ENCODE measurements at regions of chr12 and their contacts with region 1.

Region 1: DNA sequence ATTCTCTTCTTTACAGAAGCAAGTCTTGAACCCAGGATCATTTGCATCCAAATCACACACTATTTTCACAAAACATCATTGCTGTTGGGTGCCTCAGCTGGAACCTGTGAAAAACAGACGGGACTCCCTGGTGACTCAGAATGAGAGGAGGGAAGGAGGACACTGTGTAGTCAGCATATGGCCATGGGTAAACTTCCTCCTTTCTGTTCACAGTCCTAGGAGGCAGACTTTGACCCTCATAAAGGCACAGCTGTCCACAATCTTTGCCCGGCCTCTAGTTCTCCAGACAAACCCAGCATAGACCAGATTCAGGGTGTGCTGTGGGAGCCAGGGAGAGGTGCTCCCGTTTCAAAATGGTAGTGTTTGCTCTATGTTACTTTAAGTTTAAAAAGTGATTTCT is 62.0 kb downstream of the DYRK2 start:
- DNase-seq: peak; percentile 83
- ATAC-seq: peak; percentile 80
- H3K4me3 ChIP-seq: no peak overlapping the region
- H3K27ac ChIP-seq: peak overlapping the region; percentile 19; the same call in 1 of the 2 replicates
- H3K4me1 ChIP-seq: peaks cover 44% of the 10 kb centered on the region
- H3K27me3 ChIP-seq: no peaks in the 10 kb centered on the region
- CTCF ChIP-seq: no peak

Region 2: GRCh38 chr12:67025543-67026114 is 685.0 kb before region 1 on chr12:
- CTCF ChIA-PET with region 1: no interaction called
- POLR2A ChIA-PET with region 1: no interaction called
- intact Hi-C with region 1: no loop called
- DNase-seq: peak; percentile 77
- ATAC-seq: peak; percentile 46; the same call in 1 of the 2 replicates
- H3K4me3 ChIP-seq: no peak overlapping the region
- H3K27ac ChIP-seq: no peak overlapping the region
- H3K4me1 ChIP-seq: no peaks in the 10 kb centered on the region
- H3K27me3 ChIP-seq: no peaks in the 10 kb centered on the region
- CTCF ChIP-seq: peak; percentile 73

Region 3: DNA sequence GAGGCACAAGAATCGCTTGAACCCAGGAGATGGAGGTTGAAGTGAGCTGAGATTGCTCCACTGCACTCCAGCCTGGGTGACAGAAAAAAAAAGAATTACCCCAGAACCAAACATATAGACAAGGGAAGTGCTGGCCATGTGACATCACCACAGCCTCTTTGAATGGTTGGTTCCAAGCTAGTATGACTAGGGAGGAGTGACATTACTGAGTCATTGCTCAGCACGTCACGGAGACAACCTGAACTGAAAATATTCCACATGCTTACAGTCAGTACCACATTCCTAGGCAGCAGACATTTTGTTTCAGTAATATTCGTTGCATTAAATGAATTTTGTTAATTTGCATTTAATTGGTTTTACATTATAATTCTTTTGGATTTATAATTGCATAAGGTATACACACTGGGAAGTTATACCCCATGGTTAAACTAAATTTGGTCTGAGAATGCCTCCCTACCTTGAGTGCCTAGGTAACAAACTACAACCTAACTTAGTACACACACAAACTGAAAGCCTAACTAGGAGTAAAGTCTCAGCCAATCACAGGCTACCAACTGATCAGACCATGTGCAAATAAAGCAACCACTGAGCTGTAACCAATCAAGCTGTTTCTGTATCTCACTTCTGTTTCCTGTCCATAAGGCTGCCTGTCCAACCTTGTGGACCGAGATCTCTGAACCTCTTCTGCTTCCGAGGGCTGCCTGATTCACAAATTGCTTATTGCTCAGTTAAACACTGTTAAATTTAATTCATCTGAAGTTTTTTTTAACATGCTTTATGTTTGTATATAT is 277.0 kb before region 1 on chr12:
- CTCF ChIA-PET with region 1: no interaction called
- POLR2A ChIA-PET with region 1: no interaction called
- intact Hi-C with region 1: loop called (anchors 10 kb)
- DNase-seq: peak; percentile 45
- ATAC-seq: no peak
- H3K4me3 ChIP-seq: no peak overlapping the region
- H3K27ac ChIP-seq: no peak overlapping the region
- H3K4me1 ChIP-seq: peaks cover 41% of the 10 kb centered on the region
- H3K27me3 ChIP-seq: no peaks in the 10 kb centered on the region
- CTCF ChIP-seq: no peak

Region 4: DNA sequence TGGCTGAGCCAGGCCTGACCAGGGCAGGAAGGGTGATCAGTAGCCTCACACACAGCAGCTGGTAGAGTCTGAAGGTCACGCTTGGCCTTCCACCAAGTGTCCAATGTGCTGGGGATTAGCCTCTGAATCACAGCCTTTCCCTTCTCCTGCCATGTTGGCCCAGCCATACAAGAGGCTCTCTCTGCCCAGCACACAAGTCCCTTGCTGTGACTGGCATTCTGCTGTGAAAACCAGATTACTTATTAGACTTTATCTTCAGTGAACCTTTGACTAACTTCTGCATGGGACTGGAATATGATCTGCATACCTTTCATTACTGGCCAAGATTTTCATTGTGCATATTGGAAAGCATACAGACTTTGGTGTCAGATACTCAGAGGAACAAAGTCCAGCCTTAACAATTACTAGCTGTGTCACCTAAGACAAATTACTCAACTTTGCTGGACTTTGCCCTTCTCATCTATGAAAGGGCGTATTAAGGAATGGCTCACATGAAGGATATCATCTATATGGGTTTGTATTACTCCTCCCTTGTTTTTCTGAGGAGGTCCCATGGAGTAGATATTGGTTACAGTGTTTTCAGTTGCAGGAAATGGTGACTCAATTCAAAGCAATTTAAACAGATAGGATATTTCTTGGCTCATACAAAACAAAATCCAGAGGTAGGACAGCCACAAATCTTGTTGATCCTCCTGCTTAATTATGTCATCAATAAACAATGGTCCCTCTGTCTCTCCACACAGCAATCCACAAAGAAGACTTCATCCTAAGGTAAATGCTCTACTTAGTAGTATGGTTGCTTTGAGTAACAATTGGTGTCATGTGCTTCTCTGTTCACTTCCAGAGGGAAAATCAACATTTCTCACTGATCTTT is 37.5 kb after region 1 on chr12:
- CTCF ChIA-PET with region 1: no interaction called
- POLR2A ChIA-PET with region 1: no interaction called
- intact Hi-C with region 1: loop called (anchors 5 kb)
- DNase-seq: peak; percentile 73
- ATAC-seq: peak; percentile 78
- H3K4me3 ChIP-seq: no peak overlapping the region
- H3K27ac ChIP-seq: peak overlapping the region; percentile 68
- H3K4me1 ChIP-seq: peaks cover 25% of the 10 kb centered on the region
- H3K27me3 ChIP-seq: no peaks in the 10 kb centered on the region
- CTCF ChIP-seq: no peak

Region 5: GRCh38 chr12:67765776-67766767 is 55.5 kb after region 1 on chr12:
- CTCF ChIA-PET with region 1: no interaction called
- POLR2A ChIA-PET with region 1: no interaction called
- intact Hi-C with region 1: loop called (anchors 5 kb)
- DNase-seq: peak; percentile 94
- ATAC-seq: peak; percentile 97
- H3K4me3 ChIP-seq: no peak overlapping the region
- H3K27ac ChIP-seq: peak overlapping the region; percentile 81
- H3K4me1 ChIP-seq: peaks cover 19% of the 10 kb centered on the region
- H3K27me3 ChIP-seq: no peaks in the 10 kb centered on the region
- CTCF ChIP-seq: no peak

Region 6: GRCh38 chr12:67811437-67812361 is 101.1 kb after region 1 on chr12:
- CTCF ChIA-PET with region 1: no interaction called
- POLR2A ChIA-PET with region 1: no interaction called
- intact Hi-C with region 1: loop called (anchors 5 kb)
- DNase-seq: peak; percentile 84
- ATAC-seq: peak; percentile 86
- H3K4me3 ChIP-seq: no peak overlapping the region
- H3K27ac ChIP-seq: peak overlapping the region; percentile 76
- H3K4me1 ChIP-seq: peaks cover 30% of the 10 kb centered on the region
- H3K27me3 ChIP-seq: no peaks in the 10 kb centered on the region
- CTCF ChIP-seq: no peak

Region 7: DNA sequence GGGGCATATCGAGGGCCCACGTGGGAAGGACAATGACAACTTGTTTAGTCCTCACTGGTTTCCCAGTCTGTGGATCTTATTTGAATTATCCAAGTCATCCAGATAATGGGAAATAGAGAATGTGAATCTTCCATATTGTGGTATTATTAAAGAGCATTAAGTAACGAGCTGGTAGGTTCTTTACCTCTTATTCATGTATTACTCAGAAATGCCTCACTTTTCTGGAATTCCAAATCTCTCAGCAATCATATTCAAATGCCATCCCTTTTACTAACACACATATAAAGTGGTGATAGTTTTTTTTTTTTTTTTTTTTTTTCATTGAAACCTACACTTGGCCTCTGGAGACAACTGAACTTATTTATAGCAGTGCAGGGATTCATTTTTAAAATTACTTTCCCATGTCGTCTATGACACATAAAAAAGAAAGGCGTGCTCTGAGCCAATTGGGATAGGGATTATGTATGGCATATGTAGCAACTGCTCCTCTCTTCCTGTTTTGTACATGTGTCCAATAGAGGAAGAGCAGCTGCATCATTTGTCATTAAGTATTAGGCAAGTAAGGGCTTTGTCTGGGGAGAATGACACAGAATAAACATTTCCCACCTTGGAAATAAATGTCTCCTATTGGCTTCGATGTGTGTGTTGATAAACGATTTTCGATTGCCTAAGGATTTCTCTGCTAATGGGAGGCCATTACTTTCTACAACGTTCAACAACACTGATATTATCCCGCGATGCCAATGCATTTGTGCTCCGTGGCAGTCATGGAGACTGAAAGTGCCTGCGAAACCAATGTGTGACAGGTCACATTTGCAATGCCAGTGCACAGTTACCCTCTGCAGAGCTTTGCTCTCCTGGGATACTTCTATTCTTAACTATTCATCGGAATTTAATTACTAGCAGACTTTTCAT is 200.0 kb after region 1 on chr12:
- CTCF ChIA-PET with region 1: no interaction called
- POLR2A ChIA-PET with region 1: no interaction called
- intact Hi-C with region 1: loop called (anchors 10 kb)
- DNase-seq: peak; percentile 97
- ATAC-seq: peak; percentile 81
- H3K4me3 ChIP-seq: no peak overlapping the region
- H3K27ac ChIP-seq: peak overlapping the region; percentile 89
- H3K4me1 ChIP-seq: peaks cover 38% of the 10 kb centered on the region
- H3K27me3 ChIP-seq: no peaks in the 10 kb centered on the region
- CTCF ChIP-seq: no peak

Region 8: GRCh38 chr12:68001486-68002466 is 291.2 kb after region 1 on chr12:
- CTCF ChIA-PET with region 1: no interaction called
- POLR2A ChIA-PET with region 1: no interaction called
- intact Hi-C with region 1: no loop called
- DNase-seq: peak; percentile 60
- ATAC-seq: peak; percentile 38; the same call in 1 of the 2 replicates
- H3K4me3 ChIP-seq: no peak overlapping the region
- H3K27ac ChIP-seq: no peak overlapping the region
- H3K4me1 ChIP-seq: no peaks in the 10 kb centered on the region
- H3K27me3 ChIP-seq: no peaks in the 10 kb centered on the region
- CTCF ChIP-seq: peak; percentile 71